A673 (cell line): ENCODE measurements at regions of chr2 and their contacts with region 1.

Region 1: GRCh38 chr2:127049927-127050802 is 56.8 kb downstream of the BIN1 start:
- DNase-seq: peak; percentile 67
- H3K4me3 ChIP-seq: no peak overlapping the region
- H3K27ac ChIP-seq: no peak overlapping the region
- H3K4me1 ChIP-seq: no peaks in the 10 kb centered on the region
- H3K27me3 ChIP-seq: no peaks in the 10 kb centered on the region
- CTCF ChIP-seq: peak; percentile 95

Region 2: DNA sequence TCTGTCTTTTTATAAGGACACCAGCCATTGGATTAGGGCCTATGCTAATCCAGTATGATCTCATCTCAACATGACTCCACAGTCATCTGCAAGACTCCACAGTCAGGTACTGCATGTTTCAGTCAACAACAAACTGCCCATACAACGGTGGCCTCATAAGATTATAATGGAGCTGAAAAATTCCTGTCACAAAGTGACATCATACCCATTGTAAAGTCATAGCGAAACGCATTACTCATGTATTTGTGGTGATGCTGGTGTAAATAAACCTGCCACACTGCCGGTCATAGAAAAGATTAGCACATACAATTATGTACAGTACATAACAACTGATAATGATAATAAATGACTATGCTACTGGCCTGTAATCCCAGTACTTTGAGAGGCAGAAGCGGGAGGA is 49.2 kb before region 1 on chr2:
- CTCF ChIA-PET with region 1: no interaction called
- POLR2A ChIA-PET with region 1: no interaction called
- intact Hi-C with region 1: no loop called
- DNase-seq: no peak
- H3K4me3 ChIP-seq: no peak overlapping the region
- H3K27ac ChIP-seq: no peak overlapping the region
- H3K4me1 ChIP-seq: no peaks in the 10 kb centered on the region
- H3K27me3 ChIP-seq: no peaks in the 10 kb centered on the region
- CTCF ChIP-seq: no peak

Region 3: GRCh38 chr2:127293748-127294562 is 243.8 kb after region 1 on chr2 and contains the start of gene ERCC3:
- CTCF ChIA-PET with region 1: interaction called, 12 read pairs
- POLR2A ChIA-PET with region 1: no interaction called
- intact Hi-C with region 1: no loop called
- DNase-seq: peak; percentile 93
- H3K4me3 ChIP-seq: peak within 1 kb of the TSS; percentile 91
- H3K27ac ChIP-seq: peak within 1 kb of the TSS; percentile 81
- H3K4me1 ChIP-seq: peaks cover 9% of the 10 kb centered on the region
- H3K27me3 ChIP-seq: no peaks in the 10 kb centered on the region
- CTCF ChIP-seq: no peak
- total RNA-seq, gene ERCC3: 69.5 and 70.2 TPM in 2 replicates

Region 4: GRCh38 chr2:127508631-127509034 is 458.5 kb after region 1 on chr2:
- CTCF ChIA-PET with region 1: no interaction called
- POLR2A ChIA-PET with region 1: no interaction called
- intact Hi-C with region 1: no loop called
- DNase-seq: peak; percentile 98
- H3K4me3 ChIP-seq: peak overlapping the region; percentile 1
- H3K27ac ChIP-seq: peak overlapping the region; percentile 56
- H3K4me1 ChIP-seq: peaks cover 40% of the 10 kb centered on the region
- H3K27me3 ChIP-seq: no peaks in the 10 kb centered on the region
- CTCF ChIP-seq: no peak